CD4-positive, alpha-beta T cell (primary cell): ENCODE measurements at regions of chr17 and their contacts with region 1.

Region 1: DNA sequence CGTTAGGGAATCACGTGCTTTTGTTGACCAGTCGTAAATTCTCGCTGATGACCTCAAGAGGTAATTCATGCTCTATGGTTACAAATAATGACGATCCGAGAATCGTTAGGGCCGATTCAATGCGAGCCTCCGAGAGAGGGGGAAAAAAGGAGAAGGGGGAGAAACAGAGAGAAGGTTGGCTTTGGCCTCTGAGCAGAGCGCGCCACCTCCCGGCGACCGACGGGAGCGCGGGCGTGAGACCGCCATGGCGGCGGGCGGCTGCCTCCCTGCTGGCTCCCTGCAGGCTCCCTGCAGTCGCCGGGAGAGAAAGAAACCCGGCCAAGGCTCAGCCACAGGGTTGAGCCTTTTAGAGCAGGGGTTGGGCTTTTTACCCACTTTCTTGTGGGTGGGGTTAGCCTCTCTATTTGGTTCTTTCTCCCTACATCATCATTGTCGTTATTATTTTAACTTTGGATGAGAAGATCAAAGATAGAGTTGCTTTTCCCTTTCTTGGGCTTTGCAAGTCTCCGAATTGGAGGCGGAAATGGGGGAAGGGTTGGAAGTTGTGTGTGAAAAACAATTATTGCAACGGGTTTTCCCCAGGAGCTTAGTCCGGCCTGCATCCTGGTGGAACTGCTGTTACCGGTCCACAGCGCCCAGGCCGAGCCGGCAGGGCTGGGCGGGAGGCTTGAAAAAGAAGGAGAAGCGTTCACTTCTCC is 410 bp upstream of the HOXB5 start:
- DNase-seq: peak; percentile 61 to 91 (median 82)
- ATAC-seq: peak; percentile 74
- H3K4me3 ChIP-seq: peak overlapping the region; percentile 45
- H3K4me3 Mint-ChIP-seq: peak overlapping the region; percentile 74
- H3K27ac ChIP-seq: no peak overlapping the region
- H3K27ac Mint-ChIP-seq: no peak overlapping the region
- H3K4me1 ChIP-seq: peaks cover 53% of the 10 kb centered on the region
- H3K4me1 Mint-ChIP-seq: peaks cover 46% of the 10 kb centered on the region
- H3K27me3 ChIP-seq: peaks cover 83 to 94% of the 10 kb centered on the region in 2 experiments
- H3K27me3 Mint-ChIP-seq: peaks cover 98% of the 10 kb centered on the region
- CTCF ChIP-seq: peak; percentile 83

Region 2: GRCh38 chr17:48084932-48085444 is 509.0 kb before region 1 on chr17:
- CTCF ChIA-PET with region 1: no interaction called
- POLR2A ChIA-PET with region 1: no interaction called
- intact Hi-C with region 1: loop called in 1 of 2 experiments (anchors 5 kb)
- DNase-seq: no peak
- ATAC-seq: no peak
- H3K4me3 ChIP-seq: no peak overlapping the region
- H3K4me3 Mint-ChIP-seq: no peak overlapping the region
- H3K27ac ChIP-seq: no peak overlapping the region
- H3K27ac Mint-ChIP-seq: no peak overlapping the region
- H3K4me1 ChIP-seq: no peaks in the 10 kb centered on the region
- H3K4me1 Mint-ChIP-seq: peaks cover 10% of the 10 kb centered on the region
- H3K27me3 ChIP-seq: no peaks in the 10 kb centered on the region
- H3K27me3 Mint-ChIP-seq: no peaks in the 10 kb centered on the region
- CTCF ChIP-seq: no peak

Region 3: GRCh38 chr17:48307814-48308411 is 286.1 kb before region 1 on chr17:
- CTCF ChIA-PET with region 1: interaction called, 13 read pairs
- POLR2A ChIA-PET with region 1: no interaction called
- intact Hi-C with region 1: no loop called
- DNase-seq: peak; percentile 26 to 75 (median 41)
- ATAC-seq: peak; percentile 87
- H3K4me3 ChIP-seq: no peak overlapping the region
- H3K4me3 Mint-ChIP-seq: no peak overlapping the region
- H3K27ac ChIP-seq: no peak overlapping the region
- H3K27ac Mint-ChIP-seq: no peak overlapping the region
- H3K4me1 ChIP-seq: no peaks in the 10 kb centered on the region
- H3K4me1 Mint-ChIP-seq: peaks cover 55% of the 10 kb centered on the region
- H3K27me3 ChIP-seq: no peaks in the 10 kb centered on the region
- H3K27me3 Mint-ChIP-seq: no peaks in the 10 kb centered on the region
- CTCF ChIP-seq: peak; percentile 87

Region 4: GRCh38 chr17:48351831-48352332 is 242.1 kb before region 1 on chr17:
- CTCF ChIA-PET with region 1: interaction called, 12 read pairs
- POLR2A ChIA-PET with region 1: no interaction called
- intact Hi-C with region 1: no loop called
- DNase-seq: peak in 3 of 14 experiments; percentile 57 to 71 (median 68)
- ATAC-seq: peak; percentile 76
- H3K4me3 ChIP-seq: no peak overlapping the region
- H3K4me3 Mint-ChIP-seq: no peak overlapping the region
- H3K27ac ChIP-seq: no peak overlapping the region
- H3K27ac Mint-ChIP-seq: no peak overlapping the region
- H3K4me1 ChIP-seq: no peaks in the 10 kb centered on the region
- H3K4me1 Mint-ChIP-seq: peaks cover 27% of the 10 kb centered on the region
- H3K27me3 ChIP-seq: no peaks in the 10 kb centered on the region
- H3K27me3 Mint-ChIP-seq: no peaks in the 10 kb centered on the region
- CTCF ChIP-seq: peak; percentile 93

Region 5: GRCh38 chr17:48392857-48393256 is 201.1 kb before region 1 on chr17:
- CTCF ChIA-PET with region 1: no interaction called
- POLR2A ChIA-PET with region 1: no interaction called
- intact Hi-C with region 1: no loop called
- DNase-seq: no peak
- ATAC-seq: no peak
- H3K4me3 ChIP-seq: no peak overlapping the region
- H3K4me3 Mint-ChIP-seq: no peak overlapping the region
- H3K27ac ChIP-seq: no peak overlapping the region
- H3K27ac Mint-ChIP-seq: no peak overlapping the region
- H3K4me1 ChIP-seq: peaks cover 4% of the 10 kb centered on the region
- H3K4me1 Mint-ChIP-seq: peaks cover 54% of the 10 kb centered on the region
- H3K27me3 ChIP-seq: no peaks in the 10 kb centered on the region
- H3K27me3 Mint-ChIP-seq: no peaks in the 10 kb centered on the region
- CTCF ChIP-seq: no peak

Region 6: DNA sequence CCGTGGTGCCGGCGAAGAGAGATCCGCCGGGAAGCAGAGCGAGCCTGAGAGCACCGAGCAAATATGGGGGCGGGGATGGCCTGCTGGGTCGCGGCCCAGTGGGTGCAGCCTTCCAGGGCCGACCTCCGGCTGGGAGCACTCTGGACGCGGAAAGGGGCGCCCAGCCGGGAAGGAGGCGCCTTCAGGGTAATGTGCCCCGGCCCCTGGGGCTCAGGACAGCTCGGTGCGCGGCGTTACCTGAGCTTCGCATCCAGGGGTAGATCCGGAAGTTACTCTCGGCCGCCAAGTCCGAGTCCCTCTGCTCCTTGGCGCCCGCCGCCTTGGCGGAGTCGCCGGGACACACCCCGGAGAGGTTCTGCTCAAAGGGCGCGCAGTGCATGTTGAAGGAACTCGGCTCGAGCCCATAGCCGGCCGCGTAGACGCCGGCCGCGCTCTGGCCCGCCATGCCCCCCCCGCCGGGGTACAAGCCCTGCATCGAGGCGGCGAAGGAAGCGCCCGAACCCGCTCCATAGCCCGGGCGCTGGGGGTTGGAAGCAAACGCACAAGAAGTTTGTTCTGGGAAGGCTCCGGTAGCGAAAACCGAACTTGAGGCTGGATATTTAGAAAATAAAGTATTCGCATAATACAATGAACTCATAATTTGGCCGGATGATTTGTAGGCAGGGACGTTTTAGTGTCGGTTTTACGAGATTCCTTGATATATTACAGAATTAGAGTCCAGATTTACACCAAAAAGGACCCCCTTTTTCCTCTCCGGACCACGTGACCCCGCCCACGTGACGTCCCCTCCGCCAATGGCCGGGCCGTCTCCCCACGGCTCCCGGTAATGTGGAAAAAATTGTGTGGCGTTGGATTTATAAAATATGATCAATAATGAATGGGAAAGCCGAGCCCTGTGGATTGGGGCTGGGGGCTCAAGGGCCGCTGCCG is 16.6 kb after region 1 on chr17 and contains the start of gene HOXB7:
- CTCF ChIA-PET with region 1: interaction called, 19 read pairs
- POLR2A ChIA-PET with region 1: interaction called, 3 read pairs
- intact Hi-C with region 1: no loop called
- DNase-seq: peak in 7 of 14 experiments; percentile 36 to 70 (median 60)
- ATAC-seq: peak; percentile 18
- H3K4me3 ChIP-seq: peak within 1 kb of the TSS; percentile 71
- H3K4me3 Mint-ChIP-seq: peak within 1 kb of the TSS; percentile 89
- H3K27ac ChIP-seq: no peak within 1 kb of the TSS
- H3K27ac Mint-ChIP-seq: no peak within 1 kb of the TSS
- H3K4me1 ChIP-seq: peaks cover 57% of the 10 kb centered on the region
- H3K4me1 Mint-ChIP-seq: peaks cover 51% of the 10 kb centered on the region
- H3K27me3 ChIP-seq: peaks cover 75 to 80% of the 10 kb centered on the region in 2 experiments
- H3K27me3 Mint-ChIP-seq: peaks cover 89% of the 10 kb centered on the region
- CTCF ChIP-seq: no peak
- total RNA-seq, gene HOXB7: not detected

Region 7: GRCh38 chr17:49108318-49108717 is 514.3 kb after region 1 on chr17:
- CTCF ChIA-PET with region 1: no interaction called
- POLR2A ChIA-PET with region 1: no interaction called
- intact Hi-C with region 1: no loop called
- DNase-seq: no peak
- ATAC-seq: no peak
- H3K4me3 ChIP-seq: no peak overlapping the region
- H3K4me3 Mint-ChIP-seq: no peak overlapping the region
- H3K27ac ChIP-seq: no peak overlapping the region
- H3K27ac Mint-ChIP-seq: no peak overlapping the region
- H3K4me1 ChIP-seq: no peaks in the 10 kb centered on the region
- H3K4me1 Mint-ChIP-seq: peaks cover 3% of the 10 kb centered on the region
- H3K27me3 ChIP-seq: no peaks in the 10 kb centered on the region
- H3K27me3 Mint-ChIP-seq: peaks cover 17% of the 10 kb centered on the region
- CTCF ChIP-seq: no peak